ENCODE measurements at regions of chr11 and their contacts with region 1.

Region 1: DNA sequence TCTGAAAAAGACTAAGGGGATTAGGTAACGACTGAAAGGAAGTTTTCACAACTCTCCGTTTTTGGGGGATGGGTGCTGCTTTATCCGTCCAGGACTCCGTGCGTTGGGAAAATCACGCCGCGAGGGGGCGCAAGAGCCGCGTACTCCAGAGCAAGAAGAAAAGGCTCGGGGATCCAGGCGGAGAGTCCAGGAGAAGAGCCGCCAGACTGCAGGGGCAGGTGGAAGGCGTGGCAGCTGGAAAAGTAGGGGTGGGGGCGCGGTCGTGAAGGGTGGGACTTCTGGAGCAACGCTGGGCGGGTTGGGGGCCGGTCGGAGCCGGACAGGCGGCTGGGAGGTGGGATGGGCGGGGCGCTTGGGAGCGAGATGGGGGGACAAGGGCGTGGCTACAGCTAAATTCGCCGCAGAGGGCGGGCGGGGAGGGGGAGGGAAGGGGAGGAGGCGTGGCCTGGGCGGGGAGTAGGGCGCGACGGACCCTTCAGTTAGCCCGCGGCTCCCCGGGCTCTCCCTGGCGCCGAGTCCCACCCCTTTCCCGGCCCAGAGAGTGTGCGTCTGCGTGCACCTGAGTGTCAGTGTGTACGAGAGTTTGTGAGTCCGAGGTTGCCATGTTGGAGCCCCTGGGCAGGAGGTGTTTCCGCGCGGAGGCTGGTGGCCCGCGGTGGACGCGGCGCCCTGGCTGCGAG is 613 bp upstream of the ARHGEF17 start:
- H3K4me3 Mint-ChIP-seq: peak overlapping the region; percentile 87
- H3K27ac Mint-ChIP-seq: peak overlapping the region; percentile 58
- H3K4me1 Mint-ChIP-seq: peaks cover 29% of the 10 kb centered on the region
- H3K27me3 Mint-ChIP-seq: peaks cover 28% of the 10 kb centered on the region

Region 2: DNA sequence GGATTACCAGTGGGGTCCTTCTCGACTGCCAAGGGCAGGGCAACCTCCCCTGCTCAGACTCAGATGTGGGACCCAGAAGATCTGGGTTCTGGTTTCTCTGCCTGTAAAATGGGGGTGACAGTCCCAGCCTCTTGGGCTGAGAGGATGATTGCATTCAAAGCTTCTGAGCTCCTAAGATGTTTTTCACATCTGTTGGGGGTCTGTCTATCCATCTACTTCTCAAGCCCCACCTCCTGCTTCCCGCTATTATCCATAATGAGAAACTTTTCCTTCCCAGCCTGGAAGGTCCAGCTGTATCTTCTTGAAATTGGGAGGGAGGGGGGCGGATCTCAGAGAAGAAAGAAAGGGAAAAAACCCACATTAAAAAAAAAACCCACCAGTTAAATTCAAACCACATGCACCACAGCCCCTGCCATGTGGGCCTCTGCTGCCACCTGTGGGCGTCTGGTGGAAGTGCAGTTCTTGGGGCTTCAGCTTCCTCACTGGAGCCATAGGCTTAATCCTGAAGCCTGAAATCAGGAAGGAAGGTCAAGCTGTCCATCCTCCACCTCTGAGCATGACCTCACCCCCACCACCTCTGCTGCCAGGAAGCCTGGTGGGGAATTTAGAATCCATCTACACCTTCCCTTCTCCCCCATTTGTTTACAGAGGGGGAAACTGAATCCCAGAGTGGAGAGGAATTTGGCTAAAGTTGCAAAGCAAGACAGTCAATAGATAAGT is 27.9 kb after region 1 on chr11:
- intact Hi-C with region 1: loop called (anchors 1 kb)
- H3K4me3 Mint-ChIP-seq: no peak overlapping the region
- H3K27ac Mint-ChIP-seq: no peak overlapping the region
- H3K4me1 Mint-ChIP-seq: peaks cover 15% of the 10 kb centered on the region
- H3K27me3 Mint-ChIP-seq: peaks cover 6% of the 10 kb centered on the region

Region 3: DNA sequence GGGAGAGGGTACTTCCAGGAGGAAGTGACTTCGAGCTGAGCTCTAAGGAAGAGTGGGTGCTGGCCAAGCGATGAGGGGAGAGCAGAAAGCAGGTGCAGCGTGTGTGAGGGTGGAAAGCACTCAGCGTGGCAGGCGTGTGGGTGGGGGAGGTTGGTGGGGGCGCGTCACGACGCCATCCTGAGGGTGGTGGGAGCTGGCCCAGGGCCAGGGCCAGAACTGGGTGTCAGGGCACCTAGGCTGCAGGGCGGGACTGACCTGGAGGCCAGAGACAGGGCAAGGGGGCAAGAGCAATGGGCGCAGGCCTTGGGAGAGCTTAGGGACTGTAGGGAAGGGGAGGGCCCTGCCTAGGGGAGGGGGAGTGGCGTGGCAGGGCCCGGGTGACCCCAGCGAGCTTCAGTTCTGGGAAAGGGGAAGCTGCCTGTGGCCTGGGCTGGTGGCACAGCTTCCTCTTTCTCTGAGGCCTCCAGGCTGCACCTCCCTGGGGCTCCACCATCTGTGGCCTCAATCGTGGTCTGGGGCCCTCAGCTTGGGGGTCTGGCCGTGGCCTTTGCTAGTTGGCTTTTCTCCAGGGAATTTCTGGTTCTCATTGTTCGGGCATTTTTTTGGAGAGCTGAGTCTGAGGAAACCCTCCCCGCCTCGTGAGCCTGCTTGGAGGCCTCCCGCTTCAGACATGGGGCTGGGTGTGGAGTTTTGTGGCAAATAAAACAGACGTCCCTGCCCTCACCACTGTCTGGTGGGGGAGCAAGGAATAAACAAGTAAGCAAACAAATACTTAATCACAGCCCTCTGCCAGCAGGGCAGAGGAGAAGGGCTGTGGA is 77.6 kb after region 1 on chr11:
- intact Hi-C with region 1: loop called (anchors 5 kb)
- H3K4me3 Mint-ChIP-seq: peak overlapping the region; percentile 84
- H3K27ac Mint-ChIP-seq: peak overlapping the region; percentile 86
- H3K4me1 Mint-ChIP-seq: peaks cover 98% of the 10 kb centered on the region
- H3K27me3 Mint-ChIP-seq: no peaks in the 10 kb centered on the region

Measured in dendritic cell treated with granulocyte-macrophage colony-stimulating factor and Interleukin-4, amounts not matched to agents 40 ng/mL and 50 ng/mL, for 4 days (primary cell).